BJ (cell line): ENCODE measurements at regions of chr21 and their contacts with region 1.

Region 1: GRCh38 chr21:45287438-45288391 is at the start of gene POFUT2:
- DNase-seq: no peak
- H3K4me3 ChIP-seq: peak within 1 kb of the TSS; percentile 95
- H3K27me3 ChIP-seq: no peaks in the 10 kb centered on the region
- CTCF ChIP-seq: no peak
- polyA plus RNA-seq, gene POFUT2: 27.0 and 38.5 TPM in 2 replicates

Region 2: GRCh38 chr21:45309069-45309986 is 21.6 kb after region 1 on chr21:
- CTCF ChIA-PET with region 1: interaction called, 3 read pairs
- POLR2A ChIA-PET with region 1: interaction called, 24 read pairs
- DNase-seq: no peak
- H3K4me3 ChIP-seq: no peak overlapping the region
- H3K27me3 ChIP-seq: no peaks in the 10 kb centered on the region
- CTCF ChIP-seq: peak; percentile 79

Region 3: DNA sequence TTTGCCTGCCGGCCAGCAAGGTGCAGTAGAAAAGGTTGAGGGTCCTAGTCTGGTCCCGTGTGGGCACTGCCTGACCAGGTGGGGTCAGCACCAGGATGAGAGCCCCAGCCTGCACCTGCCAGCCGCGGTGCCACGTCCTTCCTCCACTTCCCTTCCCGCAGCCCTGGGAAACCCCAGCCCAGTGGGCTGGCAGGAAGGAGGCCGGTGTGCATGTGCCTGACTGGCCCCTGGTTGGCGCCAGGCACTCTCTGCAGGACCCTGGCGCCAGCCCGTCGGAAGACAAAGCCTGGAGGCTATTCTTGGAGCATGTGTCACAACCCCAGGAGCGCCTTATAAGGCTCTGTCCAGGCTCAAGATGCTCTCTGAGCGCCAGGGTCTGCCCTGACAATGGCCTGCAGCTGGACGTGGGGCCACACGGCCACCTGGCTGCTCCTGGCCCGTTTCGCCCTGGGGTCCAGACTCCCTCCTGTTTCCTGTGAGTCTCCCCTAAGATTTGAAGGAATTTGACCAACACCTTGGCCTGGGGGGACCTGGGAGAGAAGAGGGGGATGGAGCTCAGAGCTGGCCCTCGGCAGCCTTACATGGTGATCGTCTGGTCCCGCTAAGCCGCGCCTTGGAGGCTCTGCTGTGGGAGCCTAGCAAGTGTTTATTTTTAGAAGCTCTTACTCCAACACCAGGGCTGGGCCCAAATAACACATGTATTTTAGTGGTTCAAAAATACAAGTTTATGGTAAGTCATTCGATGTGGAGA is 31.9 kb after region 1 on chr21:
- CTCF ChIA-PET with region 1: interaction called, 11 read pairs
- POLR2A ChIA-PET with region 1: no interaction called
- DNase-seq: no peak
- H3K4me3 ChIP-seq: no peak overlapping the region
- H3K27me3 ChIP-seq: no peaks in the 10 kb centered on the region
- CTCF ChIP-seq: peak; percentile 27; the same call in 1 of the 2 replicates

Region 4: GRCh38 chr21:45439161-45439872 is 151.6 kb after region 1 on chr21:
- CTCF ChIA-PET with region 1: interaction called, 66 read pairs
- POLR2A ChIA-PET with region 1: no interaction called
- DNase-seq: peak; percentile 40
- H3K4me3 ChIP-seq: 0 out of 2 replicates have a peak overlapping the region, but pooled peaks have one; percentile 12
- H3K27me3 ChIP-seq: no peaks in the 10 kb centered on the region
- CTCF ChIP-seq: peak; percentile 93

Region 5: DNA sequence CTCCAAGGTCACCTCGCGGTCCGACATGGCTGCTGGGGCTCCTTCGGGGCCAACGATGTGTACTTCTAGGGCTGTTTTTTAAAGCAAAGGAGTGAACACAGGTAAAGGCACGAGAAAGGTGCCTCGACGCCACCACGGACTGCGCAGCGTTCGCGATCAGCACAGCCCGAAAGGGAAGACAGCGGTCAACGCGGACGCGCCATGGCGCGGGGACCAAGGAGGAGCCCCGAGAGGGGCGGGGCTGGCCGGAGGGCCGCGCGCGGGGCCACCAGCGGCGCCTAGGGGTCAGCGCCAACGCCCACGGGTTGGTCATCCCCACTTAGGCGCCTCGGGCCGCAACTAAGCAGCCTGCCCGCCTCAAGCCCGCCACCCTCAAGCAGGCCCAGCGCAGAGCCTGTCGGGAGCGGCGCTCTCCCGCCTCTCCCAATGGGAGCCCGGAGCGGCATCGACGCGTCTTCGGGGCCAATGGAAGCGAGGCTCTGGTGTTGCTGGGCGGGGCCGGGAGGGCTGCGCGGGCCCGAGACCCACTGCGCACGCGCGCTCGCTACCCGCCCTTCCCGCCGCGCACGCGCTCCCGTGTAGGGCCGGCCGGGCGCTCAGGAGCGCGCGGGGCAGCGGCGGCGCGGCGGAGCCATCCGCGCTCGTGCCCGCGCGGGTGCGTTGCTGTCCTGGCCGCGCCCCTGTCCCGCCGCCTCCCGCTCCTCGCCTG is 1170.8 kb after region 1 on chr21 and contains the start of gene DIP2A:
- CTCF ChIA-PET with region 1: no interaction called
- POLR2A ChIA-PET with region 1: no interaction called
- DNase-seq: peak; percentile 78
- H3K4me3 ChIP-seq: peak within 1 kb of the TSS; percentile 87
- H3K27me3 ChIP-seq: no peaks in the 10 kb centered on the region
- CTCF ChIP-seq: no peak
- polyA plus RNA-seq, gene DIP2A: 13.2 and 18.7 TPM in 2 replicates